Naive thymus-derived CD8-positive, alpha-beta T cell (primary cell): ENCODE measurements at regions of chr5 and their contacts with region 1.

Region 1: GRCh38 chr5:176530983-176531821 is 6.0 kb downstream of the RNF44 start:
- DNase-seq: peak in 1 of 10 donors; percentile 26
- ATAC-seq: no peak
- H3K4me3 Mint-ChIP-seq: peak overlapping the region; percentile 70 to 94 (median 83)
- H3K27ac Mint-ChIP-seq: peak overlapping the region; percentile 85 to 95 (median 92)
- H3K4me1 Mint-ChIP-seq: peaks cover 40 to 75% (median 67%) of the 10 kb centered on the region in 4 donors
- H3K27me3 Mint-ChIP-seq: no peaks in the 10 kb centered on the region

Region 2: GRCh38 chr5:176447982-176448608 is 83.1 kb before region 1 on chr5 and contains the start of gene FAF2:
- POLR2A ChIA-PET with region 1: interaction called, 88 read pairs
- DNase-seq: peak; percentile 95 to 100 (median 98)
- ATAC-seq: peak; percentile 96 to 97
- H3K4me3 Mint-ChIP-seq: peak within 1 kb of the TSS; percentile 90 to 100 (median 97)
- H3K27ac Mint-ChIP-seq: peak within 1 kb of the TSS; percentile 96 to 99 (median 98)
- H3K4me1 Mint-ChIP-seq: peaks cover 17 to 52% (median 44%) of the 10 kb centered on the region in 4 donors
- H3K27me3 Mint-ChIP-seq: peaks cover 0 to 3% (median 0%) of the 10 kb centered on the region in 5 donors
- polyA plus RNA-seq, gene FAF2: 9.5 to 12.0 (median 11.4) TPM

Region 3: DNA sequence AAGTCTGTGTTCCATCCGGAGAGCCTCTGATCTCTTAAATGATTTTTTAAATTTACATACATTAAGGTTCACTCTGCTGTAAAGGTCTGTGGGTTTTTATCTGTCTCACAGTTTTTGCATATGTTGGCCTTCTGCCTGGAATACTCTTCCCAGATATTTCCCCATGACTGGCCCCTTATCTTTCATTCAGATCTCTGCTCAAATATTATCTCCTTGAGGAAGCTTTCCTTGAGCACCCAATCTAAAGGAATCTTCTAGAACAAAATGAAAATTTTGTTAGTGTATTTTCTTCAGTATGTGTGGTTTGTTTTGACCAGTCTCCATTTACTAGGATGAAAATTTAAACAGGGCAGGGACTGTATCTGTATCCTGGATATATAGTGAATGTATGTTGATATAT is 56.7 kb before region 1 on chr5:
- POLR2A ChIA-PET with region 1: no interaction called
- DNase-seq: no peak
- ATAC-seq: no peak
- H3K4me3 Mint-ChIP-seq: no peak overlapping the region
- H3K27ac Mint-ChIP-seq: no peak overlapping the region
- H3K4me1 Mint-ChIP-seq: peaks cover 7 to 33% (median 25%) of the 10 kb centered on the region in 4 donors
- H3K27me3 Mint-ChIP-seq: no peaks in the 10 kb centered on the region

Region 4: GRCh38 chr5:176603091-176603490 is 71.9 kb after region 1 on chr5:
- POLR2A ChIA-PET with region 1: no interaction called
- DNase-seq: no peak
- ATAC-seq: no peak
- H3K4me3 Mint-ChIP-seq: no peak overlapping the region
- H3K27ac Mint-ChIP-seq: no peak overlapping the region
- H3K4me1 Mint-ChIP-seq: peaks cover 0 to 4% (median 0%) of the 10 kb centered on the region in 4 donors
- H3K27me3 Mint-ChIP-seq: peaks cover 0 to 5% (median 0%) of the 10 kb centered on the region in 5 donors